HepG2 (cell line): ENCODE measurements at regions of chr1 and their contacts with region 1.

Region 1: DNA sequence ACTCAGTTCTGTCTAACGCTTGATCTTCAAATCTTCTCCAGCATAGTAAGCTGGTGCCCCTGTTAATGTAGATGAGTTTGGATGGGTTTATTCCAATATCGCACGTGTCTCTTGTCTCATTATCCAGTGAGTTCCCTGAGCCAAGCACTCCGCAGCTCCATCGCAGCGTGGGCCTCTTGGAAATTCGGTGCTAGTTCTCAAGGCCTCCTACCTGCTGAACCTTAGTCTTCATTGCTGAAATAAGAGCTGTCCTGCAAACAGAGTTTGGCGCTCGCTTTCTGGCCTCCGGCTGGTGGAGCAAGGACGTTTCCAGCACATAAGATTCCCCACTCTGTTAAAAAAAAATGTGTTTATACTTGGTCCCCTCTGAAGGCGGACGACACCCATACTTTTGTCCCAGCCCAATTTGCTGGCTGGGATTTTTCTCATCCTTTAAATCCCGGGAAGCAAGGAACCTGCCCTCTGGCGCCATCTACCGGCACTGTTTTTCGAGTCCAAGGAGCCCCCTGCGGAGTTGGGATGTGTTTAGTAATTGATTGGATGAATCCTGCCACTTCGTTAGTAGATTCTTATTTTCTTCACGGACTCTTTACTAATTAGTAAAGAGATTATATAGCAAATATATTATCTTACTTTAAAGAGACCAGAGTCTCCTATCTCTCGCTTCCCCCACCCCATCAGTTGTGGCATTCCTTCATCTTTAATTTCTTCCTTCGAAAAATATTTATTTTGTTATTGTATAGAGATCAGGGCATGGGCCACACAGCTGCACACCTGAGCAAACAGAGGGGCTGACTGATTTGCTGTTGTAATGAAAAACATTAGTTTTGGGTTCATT is 14.7 kb downstream of the JUN start:
- DNase-seq: peak; percentile 56
- ATAC-seq: peak; percentile 79
- H3K4me3 ChIP-seq: no peak overlapping the region
- H3K27ac ChIP-seq: no peak overlapping the region
- H3K4me1 ChIP-seq: peaks cover 41% of the 10 kb centered on the region
- H3K27me3 ChIP-seq: no peaks in the 10 kb centered on the region
- CTCF ChIP-seq: peak; percentile 79
- EP300 ChIP-seq: no peak
- POLR2A ChIP-seq: no peak
- RAD21 ChIP-seq: peak; percentile 75

Region 2: GRCh38 chr1:58739856-58740466 is 29.2 kb before region 1 on chr1:
- CTCF ChIA-PET with region 1: interaction called, 51 read pairs
- POLR2A ChIA-PET with region 1: no interaction called
- in situ Hi-C with region 1: no loop called
- intact Hi-C with region 1: loop called (anchors 1 kb)
- DNase-seq: peak; percentile 52
- ATAC-seq: no peak
- H3K4me3 ChIP-seq: no peak overlapping the region
- H3K27ac ChIP-seq: no peak overlapping the region
- H3K4me1 ChIP-seq: peaks cover 17% of the 10 kb centered on the region
- H3K27me3 ChIP-seq: peaks cover 0 to 7% of the 10 kb centered on the region in 2 experiments; a peak in 1 of 5 replicates
- CTCF ChIP-seq: peak; percentile 78
- EP300 ChIP-seq: no peak
- POLR2A ChIP-seq: no peak
- RAD21 ChIP-seq: peak; percentile 80; the same call in 1 of the 2 replicates

Region 3: DNA sequence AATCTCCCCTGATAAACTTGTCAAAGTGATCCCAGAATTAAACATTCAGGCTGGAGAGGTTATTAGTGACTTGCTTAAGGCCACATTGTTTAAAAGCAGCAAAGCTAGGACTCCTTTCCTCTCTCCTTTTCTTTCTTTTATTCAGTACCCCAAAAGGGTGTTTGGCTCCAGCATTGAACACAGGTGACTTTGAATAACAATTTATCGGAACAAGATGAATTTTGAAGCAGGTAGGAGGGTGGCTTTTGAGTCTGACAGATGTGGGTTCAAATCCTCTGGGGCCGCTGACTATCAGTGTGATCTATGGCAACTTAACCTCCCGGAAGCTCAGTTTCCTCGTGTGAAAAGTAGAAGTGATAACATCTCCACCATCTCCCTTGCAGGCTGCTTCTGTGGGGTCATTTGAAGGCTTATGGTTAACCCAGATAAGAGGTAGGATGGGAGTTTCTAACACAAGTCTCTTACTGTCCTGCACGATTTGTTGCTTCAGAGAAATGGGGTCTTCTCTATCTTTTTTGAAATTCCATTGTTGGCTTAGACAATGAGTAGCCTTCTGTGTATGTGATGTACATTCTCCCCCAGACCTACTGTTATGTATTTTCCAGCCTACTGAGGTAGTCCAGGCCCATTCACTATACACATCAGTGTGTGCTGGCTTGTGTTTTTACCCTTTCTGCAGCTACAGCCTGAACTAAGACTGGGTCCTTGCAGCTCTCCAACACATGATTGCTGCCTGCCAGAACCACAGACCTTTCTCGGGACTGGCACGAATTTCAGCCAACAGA is 14.3 kb before region 1 on chr1:
- CTCF ChIA-PET with region 1: no interaction called
- POLR2A ChIA-PET with region 1: interaction called, 21 read pairs
- in situ Hi-C with region 1: no loop called
- intact Hi-C with region 1: no loop called
- DNase-seq: no peak
- ATAC-seq: no peak
- H3K4me3 ChIP-seq: no peak overlapping the region
- H3K27ac ChIP-seq: peak overlapping the region; percentile 63
- H3K4me1 ChIP-seq: peaks cover 85% of the 10 kb centered on the region
- H3K27me3 ChIP-seq: no peaks in the 10 kb centered on the region
- CTCF ChIP-seq: no peak
- EP300 ChIP-seq: no peak
- POLR2A ChIP-seq: peak in 1 of 2 experiments; percentile 5; a peak in 1 of 4 replicates
- RAD21 ChIP-seq: no peak